Natural killer cell (primary cell): ENCODE measurements at regions of chr20 and their contacts with region 1.

Region 1: DNA sequence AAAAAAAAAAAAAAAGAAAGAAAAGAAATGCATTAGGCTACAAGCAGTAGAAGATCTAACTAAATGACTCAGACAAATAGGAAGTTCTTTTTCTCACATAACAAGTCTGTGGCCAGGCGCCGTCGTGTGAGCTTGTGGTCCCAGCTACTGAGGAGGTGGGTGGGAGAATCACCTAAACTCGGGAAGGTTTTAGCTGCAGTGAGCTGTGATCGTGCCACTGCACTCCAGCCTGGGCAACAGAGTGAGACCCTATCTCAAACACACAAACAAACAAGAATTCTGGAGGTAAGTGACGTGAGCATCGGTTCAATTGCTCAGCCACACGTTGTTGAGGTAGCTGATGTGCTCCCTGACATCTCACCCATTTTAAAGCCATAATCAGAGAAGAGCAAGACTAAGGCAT is 37.9 kb upstream of the SLC23A2 start:
- DNase-seq: peak; percentile 66 to 76
- ATAC-seq: peak; percentile 90 to 97 (median 94)
- H3K4me3 ChIP-seq: no peak overlapping the region
- H3K4me3 Mint-ChIP-seq: peak overlapping the region; percentile 87
- H3K27ac ChIP-seq: peak overlapping the region; percentile 54
- H3K27ac Mint-ChIP-seq: peak overlapping the region; percentile 89 to 93
- H3K4me1 ChIP-seq: peaks cover 20% of the 10 kb centered on the region
- H3K4me1 Mint-ChIP-seq: peaks cover 26 to 30% of the 10 kb centered on the region in 2 donors
- H3K27me3 ChIP-seq: no peaks in the 10 kb centered on the region
- H3K27me3 Mint-ChIP-seq: no peaks in the 10 kb centered on the region
- CTCF ChIP-seq: no peak

Region 2: DNA sequence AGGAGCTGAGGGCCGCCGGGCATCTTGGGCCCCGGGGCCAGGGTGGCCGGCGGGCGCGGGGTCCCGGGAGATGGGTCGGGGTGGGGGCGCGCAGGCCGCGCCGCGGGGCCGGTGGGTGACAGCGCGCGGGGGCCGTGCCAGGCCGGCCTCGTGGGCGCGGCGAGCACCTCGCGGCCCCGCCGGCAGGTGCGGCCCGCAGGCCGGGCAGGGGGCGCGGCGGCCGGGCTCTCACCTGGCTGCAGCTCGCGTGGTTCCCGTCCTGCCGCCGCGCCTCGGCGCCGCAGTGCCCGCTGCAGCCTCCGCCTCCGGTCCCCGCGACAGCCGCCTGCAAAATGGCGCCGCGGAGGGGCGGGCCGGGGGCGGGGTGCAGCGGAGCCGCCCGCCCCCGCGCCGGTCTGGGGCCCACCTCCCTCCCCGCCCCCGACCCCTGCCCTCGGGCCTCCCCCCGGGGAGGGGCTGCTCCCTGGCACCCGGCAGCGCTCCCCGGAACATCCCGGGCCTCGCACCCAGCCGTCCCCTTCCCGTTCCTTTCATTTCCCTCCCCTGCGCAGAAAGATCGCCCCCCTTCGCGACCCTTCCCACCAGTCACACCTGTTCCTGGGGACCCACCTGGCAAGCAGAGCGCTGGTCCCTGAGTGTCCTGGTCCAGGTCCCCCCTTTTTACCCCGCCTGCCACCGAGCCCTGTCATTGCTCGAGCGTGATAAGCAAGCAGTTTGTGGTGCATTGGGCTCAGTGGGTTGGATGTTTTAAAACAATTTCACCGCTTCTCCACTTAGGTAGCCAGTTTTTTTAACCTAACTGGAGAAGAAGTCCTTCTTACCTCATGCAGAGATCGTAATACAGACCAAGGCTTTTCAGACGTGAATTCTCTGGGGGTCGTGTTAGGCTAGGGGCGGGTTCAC is 37.8 kb before region 1 on chr20 and contains the start of gene SLC23A2:
- intact Hi-C with region 1: loop called (anchors 5 kb)
- DNase-seq: peak; percentile 49 to 81
- ATAC-seq: peak; percentile 87 to 91 (median 90)
- H3K4me3 ChIP-seq: peak within 1 kb of the TSS; percentile 73
- H3K4me3 Mint-ChIP-seq: peak within 1 kb of the TSS; percentile 96
- H3K27ac ChIP-seq: peak within 1 kb of the TSS; percentile 36
- H3K27ac Mint-ChIP-seq: peak within 1 kb of the TSS; percentile 79 to 94
- H3K4me1 ChIP-seq: peaks cover 18% of the 10 kb centered on the region
- H3K4me1 Mint-ChIP-seq: peaks cover 28 to 37% of the 10 kb centered on the region in 2 donors
- H3K27me3 ChIP-seq: no peaks in the 10 kb centered on the region
- H3K27me3 Mint-ChIP-seq: no peaks in the 10 kb centered on the region
- CTCF ChIP-seq: no peak
- total RNA-seq, gene SLC23A2: 21.8 to 31.5 (median 26.0) TPM

Region 3: GRCh38 chr20:5078399-5078958 is 39.2 kb after region 1 on chr20:
- intact Hi-C with region 1: loop called (anchors 1 kb)
- DNase-seq: peak; percentile 72 to 89
- ATAC-seq: peak; percentile 89 to 96 (median 96)
- H3K4me3 ChIP-seq: peak overlapping the region; percentile 22
- H3K4me3 Mint-ChIP-seq: peak overlapping the region; percentile 79
- H3K27ac ChIP-seq: peak overlapping the region; percentile 94
- H3K27ac Mint-ChIP-seq: peak overlapping the region; percentile 97 to 98
- H3K4me1 ChIP-seq: peaks cover 46% of the 10 kb centered on the region
- H3K4me1 Mint-ChIP-seq: peaks cover 36 to 38% of the 10 kb centered on the region in 2 donors
- H3K27me3 ChIP-seq: no peaks in the 10 kb centered on the region
- H3K27me3 Mint-ChIP-seq: no peaks in the 10 kb centered on the region
- CTCF ChIP-seq: no peak